ENCODE measurements at regions of chr16 and their contacts with region 1.

Region 1: DNA sequence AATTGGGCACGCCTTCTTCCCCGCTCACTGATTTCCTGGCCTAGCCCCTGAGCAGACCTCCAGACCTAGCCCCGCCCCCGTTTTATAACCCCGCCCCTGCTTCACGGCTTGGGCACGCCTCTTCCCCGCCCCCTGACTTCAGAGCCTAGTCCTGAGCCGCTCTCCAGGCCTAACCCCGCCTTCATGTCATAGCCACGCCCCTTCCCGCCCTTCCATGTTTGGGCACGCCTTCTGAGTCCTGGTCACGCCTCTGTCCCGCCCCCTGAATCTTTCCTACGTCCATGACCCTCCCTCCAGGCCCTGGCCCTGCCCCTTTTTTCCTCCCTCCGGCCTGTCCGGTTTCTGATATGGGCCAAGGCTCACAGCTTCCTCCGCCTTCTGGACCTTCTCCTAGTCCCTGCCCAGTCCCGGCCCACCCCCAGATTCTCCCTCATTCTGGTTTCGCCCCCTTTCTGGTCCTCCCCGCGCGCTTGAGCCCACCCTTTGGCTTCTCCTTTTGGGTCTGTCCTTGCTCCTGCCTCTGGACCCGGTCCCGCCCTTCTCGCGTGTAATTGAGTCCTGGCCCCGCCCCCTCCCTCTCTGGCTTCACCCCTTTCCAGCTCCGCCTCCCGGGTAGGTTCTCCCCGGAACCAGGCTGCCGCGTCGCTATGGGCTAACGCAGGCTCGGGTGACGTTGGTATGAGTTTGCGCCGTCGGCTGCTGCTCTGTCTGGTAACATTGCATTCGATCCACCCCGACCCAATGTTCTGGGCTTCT is 15.1 kb upstream of the EEF2K start:
- DNase-seq: peak; percentile 94
- H3K4me3 Mint-ChIP-seq: peak overlapping the region; percentile 84
- H3K27ac Mint-ChIP-seq: peak overlapping the region; percentile 99
- H3K4me1 Mint-ChIP-seq: peaks cover 52% of the 10 kb centered on the region
- H3K27me3 Mint-ChIP-seq: no peaks in the 10 kb centered on the region

Region 2: DNA sequence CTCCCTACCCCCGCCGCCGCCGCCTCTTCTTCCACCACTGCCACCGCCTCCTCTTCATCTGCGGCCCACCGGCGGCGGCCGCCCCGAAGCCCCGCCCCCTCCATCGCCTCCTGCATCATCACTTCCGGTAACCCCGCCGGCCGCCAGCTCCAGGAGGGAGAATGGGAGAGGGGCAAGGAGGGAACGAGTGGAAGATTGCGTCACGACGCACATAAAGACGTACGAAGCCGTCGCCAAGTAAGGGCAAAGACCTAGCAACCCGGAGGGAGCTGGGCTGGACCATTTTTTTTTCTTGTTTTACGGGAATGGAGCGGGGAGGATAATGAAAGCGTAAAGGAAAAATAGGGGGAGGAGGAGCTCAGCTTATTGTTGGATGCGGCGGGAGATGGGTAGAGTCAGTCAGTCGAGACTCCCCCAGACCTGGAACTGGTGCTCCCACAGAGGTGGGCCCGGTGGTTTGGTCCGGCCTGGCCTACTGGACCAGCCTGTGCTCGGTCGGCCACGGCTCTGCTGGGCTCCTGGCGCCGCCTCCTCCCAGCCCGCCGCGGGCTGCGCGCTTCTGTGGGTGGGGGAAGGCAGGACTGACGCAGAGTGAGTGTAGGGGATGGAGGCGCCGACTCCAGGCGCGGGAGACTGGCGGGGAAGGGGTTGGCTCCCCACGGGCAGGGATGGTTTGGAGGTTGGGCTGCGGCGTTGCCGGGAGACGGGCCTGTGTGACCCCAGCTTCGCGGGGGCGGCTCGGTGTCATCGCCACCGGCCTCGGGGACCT is 1290.5 kb before region 1 on chr16 and contains the starts of genes DCUN1D3 and LYRM1:
- intact Hi-C with region 1: loop called (anchors 5 kb)
- DNase-seq: peak; percentile 82
- H3K4me3 Mint-ChIP-seq: peak within 1 kb of the TSS; percentile 90
- H3K27ac Mint-ChIP-seq: peak within 1 kb of the TSS; percentile 97
- H3K4me1 Mint-ChIP-seq: peaks cover 73% of the 10 kb centered on the region
- H3K27me3 Mint-ChIP-seq: no peaks in the 10 kb centered on the region
- total RNA-seq, gene DCUN1D3: 17.4 and 19.2 TPM in 2 replicates
- total RNA-seq, gene LYRM1: 30.5 and 34.7 TPM in 2 replicates

Region 3: GRCh38 chr16:22001591-22001990 is 189.4 kb before region 1 on chr16:
- intact Hi-C with region 1: loop called (anchors 2 kb)
- DNase-seq: no peak
- H3K4me3 Mint-ChIP-seq: no peak overlapping the region
- H3K27ac Mint-ChIP-seq: no peak overlapping the region
- H3K4me1 Mint-ChIP-seq: peaks cover 11% of the 10 kb centered on the region
- H3K27me3 Mint-ChIP-seq: peaks cover 7% of the 10 kb centered on the region

Region 4: DNA sequence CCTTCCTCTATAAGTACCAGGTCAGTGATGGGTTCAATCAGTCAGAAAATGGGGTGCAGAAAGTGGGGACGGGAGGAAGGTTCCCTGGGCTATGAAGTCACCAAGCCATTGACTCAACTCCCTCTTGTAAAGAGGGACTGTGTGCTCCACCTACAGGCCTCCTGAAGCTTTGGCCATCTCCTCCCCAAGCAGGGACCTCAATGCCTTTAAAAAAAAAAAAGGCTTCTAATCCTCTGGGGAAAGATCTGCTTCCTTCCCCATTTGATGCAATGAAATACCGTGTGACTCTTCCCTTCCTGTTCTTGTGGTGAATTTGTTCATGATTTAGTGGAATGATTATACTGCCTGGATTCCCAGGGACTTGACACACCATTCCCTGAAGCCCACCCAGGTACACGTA is 67.8 kb before region 1 on chr16:
- intact Hi-C with region 1: loop called (anchors 10 kb)
- DNase-seq: no peak
- H3K4me3 Mint-ChIP-seq: no peak overlapping the region
- H3K27ac Mint-ChIP-seq: no peak overlapping the region
- H3K4me1 Mint-ChIP-seq: no peaks in the 10 kb centered on the region
- H3K27me3 Mint-ChIP-seq: peaks cover 11% of the 10 kb centered on the region

Region 5: GRCh38 chr16:22217889-22218730 is 27.2 kb after region 1 on chr16:
- intact Hi-C with region 1: loop called (anchors 2 kb)
- DNase-seq: no peak
- H3K4me3 Mint-ChIP-seq: no peak overlapping the region
- H3K27ac Mint-ChIP-seq: peak overlapping the region; percentile 76
- H3K4me1 Mint-ChIP-seq: peaks cover 46% of the 10 kb centered on the region
- H3K27me3 Mint-ChIP-seq: no peaks in the 10 kb centered on the region

Region 6: DNA sequence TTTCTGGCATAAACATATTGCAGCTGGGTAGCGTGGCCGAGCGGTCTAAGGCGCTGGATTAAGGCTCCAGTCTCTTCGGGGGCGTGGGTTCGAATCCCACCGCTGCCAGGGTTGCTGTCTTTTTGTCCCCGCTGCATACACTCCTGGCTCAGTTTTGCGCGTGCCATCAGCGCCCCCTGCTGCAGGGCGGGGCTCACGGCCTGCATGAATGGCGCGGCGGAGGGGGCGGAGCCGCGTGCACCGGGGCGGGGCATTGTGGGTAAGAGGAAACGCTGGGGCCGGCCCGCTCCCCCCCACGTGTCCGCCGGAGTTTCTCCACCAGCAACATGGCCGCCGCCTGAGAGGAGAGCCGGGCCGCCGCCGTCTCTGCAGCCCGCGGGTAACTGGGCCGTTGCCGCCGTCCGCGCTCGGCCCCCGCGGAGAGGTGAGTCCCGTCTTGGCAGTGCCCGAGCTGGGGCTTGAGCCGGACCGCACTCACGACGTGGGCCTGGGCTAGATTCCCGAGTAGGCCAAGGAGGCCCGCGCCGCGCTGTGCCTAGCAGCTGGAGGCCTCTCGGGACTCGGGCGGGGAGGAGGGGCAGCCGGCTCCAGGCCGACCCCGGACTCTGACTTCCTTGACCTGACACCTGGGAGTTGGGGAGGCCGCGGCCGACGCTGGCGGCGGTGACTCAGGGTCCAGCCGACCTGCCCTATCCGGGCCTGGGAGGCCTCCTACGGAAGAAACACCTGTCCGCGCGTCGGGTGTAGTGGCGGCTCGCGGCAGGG is 106.3 kb after region 1 on chr16 and contains the start of gene POLR3E:
- intact Hi-C with region 1: loop called (anchors 1 kb)
- DNase-seq: peak; percentile 100
- H3K4me3 Mint-ChIP-seq: peak within 1 kb of the TSS; percentile 92
- H3K27ac Mint-ChIP-seq: peak within 1 kb of the TSS; percentile 98
- H3K4me1 Mint-ChIP-seq: peaks cover 26% of the 10 kb centered on the region
- H3K27me3 Mint-ChIP-seq: no peaks in the 10 kb centered on the region
- total RNA-seq, gene POLR3E: 100 and 106 TPM in 2 replicates

Measured in activated T-helper 2 cell treated with anti-CD3 and anti-CD28 coated beads, Interferon-gamma antibody, Interleukin-2, Interleukin-4, amounts not matched to agents 10 μg/mL and 5 μg/mL and 100 μg/mL, durations not matched to agents 14 hours and 24 hours and 36 hours (primary cell).